HEK293T (cell line): ENCODE measurements at regions of chr1 and their contacts with region 1.

Region 1: DNA sequence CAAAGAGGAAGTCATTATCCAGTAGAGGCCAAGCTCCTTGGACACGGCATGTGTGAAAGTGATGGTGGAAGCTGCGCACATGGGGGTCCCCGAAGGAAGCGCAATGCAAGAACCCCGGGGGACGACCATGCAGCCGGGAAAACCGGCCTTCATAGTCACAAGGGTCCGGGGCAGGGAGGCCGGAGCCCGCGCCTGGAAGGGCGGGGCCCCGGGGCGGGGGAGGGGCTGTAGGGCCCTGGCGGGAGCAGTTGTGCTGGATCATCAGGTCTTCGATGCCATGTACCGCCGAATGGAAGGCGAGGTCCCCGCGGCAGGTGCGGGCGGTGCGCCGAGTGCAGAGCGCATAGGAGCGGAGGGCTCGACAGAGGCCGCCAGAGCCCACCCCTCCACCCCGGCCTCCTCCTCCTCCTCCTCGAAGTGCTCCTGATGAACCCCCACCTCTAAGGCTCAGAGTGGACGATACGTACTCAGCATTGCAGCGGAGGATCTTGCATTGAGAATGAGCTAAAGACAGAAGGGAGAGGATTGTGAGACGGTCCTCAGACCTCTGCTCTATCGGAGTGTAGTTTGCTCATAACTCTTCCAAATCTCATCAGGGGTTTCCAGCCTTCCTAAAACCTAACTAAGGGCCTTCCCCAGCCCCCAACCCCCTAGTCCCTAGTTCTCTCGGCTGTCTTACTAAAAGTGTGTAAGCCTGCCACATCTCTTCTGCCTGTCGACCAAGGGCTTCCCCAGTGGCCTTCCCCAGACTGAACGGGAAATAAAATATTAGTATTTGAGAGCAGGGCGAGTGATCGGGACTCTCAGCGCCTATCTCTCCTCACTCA is 2.1 kb downstream of the HJV start:
- DNase-seq: no peak

Region 2: DNA sequence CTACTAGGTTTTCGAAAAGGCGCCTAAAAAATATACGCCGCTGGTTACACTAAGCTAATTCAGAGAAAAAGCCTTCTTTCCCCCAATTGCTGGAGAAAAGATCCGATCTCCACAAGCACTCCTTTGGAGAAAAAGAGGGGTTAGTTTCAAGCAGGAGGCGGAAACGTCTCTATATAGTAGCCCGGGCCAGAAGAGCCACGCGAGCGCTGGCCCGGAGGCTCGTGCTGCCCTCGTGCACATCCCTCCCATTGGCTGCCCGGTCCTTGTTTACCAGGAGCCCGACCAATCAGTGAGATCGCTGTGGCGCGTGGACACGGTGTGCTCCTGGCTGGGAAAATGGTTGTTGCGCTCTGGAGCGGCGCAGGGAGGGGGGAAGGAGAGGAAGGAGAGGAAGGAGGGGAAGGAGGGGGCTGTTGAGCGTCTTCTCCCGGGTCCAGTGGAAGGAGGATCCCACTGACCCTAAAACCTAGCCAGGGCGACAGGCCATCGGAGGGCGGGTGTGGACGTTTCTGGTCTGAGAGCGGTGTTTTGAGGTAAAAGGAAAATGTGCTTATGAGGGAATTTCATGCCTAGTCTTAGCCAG is 22.9 kb before region 1 on chr1 and contains the start of gene TXNIP:
- CTCF ChIA-PET with region 1: no interaction called
- POLR2A ChIA-PET with region 1: no interaction called
- DNase-seq: peak; percentile 99

Region 3: DNA sequence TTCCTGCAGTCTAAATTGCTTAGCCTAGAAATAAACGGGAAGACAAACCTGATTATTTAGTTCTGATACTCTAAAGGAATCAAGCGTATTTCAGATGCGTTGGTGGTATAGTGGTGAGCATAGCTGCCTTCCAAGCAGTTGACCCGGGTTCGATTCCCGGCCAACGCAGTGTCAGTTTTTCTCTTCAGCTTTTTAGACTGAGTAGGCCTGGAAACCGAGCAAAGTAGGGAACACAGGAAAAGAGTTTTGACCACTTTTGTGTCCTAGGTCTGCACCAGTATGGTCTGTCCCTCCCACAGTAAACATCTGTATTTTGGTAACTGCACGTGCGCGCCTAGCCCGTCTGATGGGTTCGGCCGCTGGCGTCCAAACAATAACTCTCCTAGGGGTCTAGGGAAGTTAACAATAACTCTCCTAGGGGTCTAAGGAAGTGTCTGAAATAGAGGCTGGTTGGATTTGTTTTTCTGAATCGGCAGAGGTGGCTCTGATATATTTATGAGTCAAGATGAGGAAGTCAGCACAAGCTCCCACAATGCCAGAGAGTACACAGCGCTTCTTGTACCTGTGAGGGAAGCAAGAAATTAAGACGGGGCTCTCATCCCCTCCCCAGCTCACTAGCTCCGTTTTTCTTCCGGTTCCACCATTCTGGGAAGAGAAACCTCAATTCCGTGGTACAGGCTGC is 17.7 kb after region 1 on chr1:
- CTCF ChIA-PET with region 1: interaction called, 19 read pairs
- POLR2A ChIA-PET with region 1: interaction called, 16 read pairs
- DNase-seq: peak; percentile 47